Natural killer cell (primary cell): ENCODE measurements at regions of chr2 and their contacts with region 1.

Region 1: GRCh38 chr2:197378494-197379307 is 56.1 kb downstream of the SF3B1 start:
- DNase-seq: peak; percentile 39 to 82
- ATAC-seq: peak; percentile 60 to 82 (median 65)
- H3K4me3 ChIP-seq: no peak overlapping the region
- H3K4me3 Mint-ChIP-seq: no peak overlapping the region
- H3K27ac ChIP-seq: no peak overlapping the region
- H3K27ac Mint-ChIP-seq: no peak overlapping the region
- H3K4me1 ChIP-seq: no peaks in the 10 kb centered on the region
- H3K4me1 Mint-ChIP-seq: peaks cover 4 to 5% of the 10 kb centered on the region in 2 donors
- H3K27me3 ChIP-seq: no peaks in the 10 kb centered on the region
- H3K27me3 Mint-ChIP-seq: peaks cover 5 to 9% of the 10 kb centered on the region in 2 donors
- CTCF ChIP-seq: peak; percentile 83

Region 2: GRCh38 chr2:196750982-196751635 is 627.6 kb before region 1 on chr2:
- intact Hi-C with region 1: loop called (anchors 1 kb)
- DNase-seq: peak; percentile 46 to 77
- ATAC-seq: peak; percentile 89 to 99 (median 98)
- H3K4me3 ChIP-seq: no peak overlapping the region
- H3K4me3 Mint-ChIP-seq: no peak overlapping the region
- H3K27ac ChIP-seq: no peak overlapping the region
- H3K27ac Mint-ChIP-seq: peak overlapping the region in 1 of 2 donors; percentile 27
- H3K4me1 ChIP-seq: peaks cover 6% of the 10 kb centered on the region
- H3K4me1 Mint-ChIP-seq: peaks cover 10 to 17% of the 10 kb centered on the region in 2 donors
- H3K27me3 ChIP-seq: no peaks in the 10 kb centered on the region
- H3K27me3 Mint-ChIP-seq: no peaks in the 10 kb centered on the region
- CTCF ChIP-seq: peak; percentile 73

Region 3: GRCh38 chr2:197011799-197012641 is 366.7 kb before region 1 on chr2:
- intact Hi-C with region 1: loop called (anchors 1 kb)
- DNase-seq: peak in 1 of 2 donors; percentile 68
- ATAC-seq: peak; percentile 59 to 77 (median 66)
- H3K4me3 ChIP-seq: no peak overlapping the region
- H3K4me3 Mint-ChIP-seq: no peak overlapping the region
- H3K27ac ChIP-seq: no peak overlapping the region
- H3K27ac Mint-ChIP-seq: peak overlapping the region; percentile 55 to 74
- H3K4me1 ChIP-seq: no peaks in the 10 kb centered on the region
- H3K4me1 Mint-ChIP-seq: peaks cover 9 to 17% of the 10 kb centered on the region in 2 donors
- H3K27me3 ChIP-seq: no peaks in the 10 kb centered on the region
- H3K27me3 Mint-ChIP-seq: no peaks in the 10 kb centered on the region
- CTCF ChIP-seq: peak; percentile 77

Region 4: DNA sequence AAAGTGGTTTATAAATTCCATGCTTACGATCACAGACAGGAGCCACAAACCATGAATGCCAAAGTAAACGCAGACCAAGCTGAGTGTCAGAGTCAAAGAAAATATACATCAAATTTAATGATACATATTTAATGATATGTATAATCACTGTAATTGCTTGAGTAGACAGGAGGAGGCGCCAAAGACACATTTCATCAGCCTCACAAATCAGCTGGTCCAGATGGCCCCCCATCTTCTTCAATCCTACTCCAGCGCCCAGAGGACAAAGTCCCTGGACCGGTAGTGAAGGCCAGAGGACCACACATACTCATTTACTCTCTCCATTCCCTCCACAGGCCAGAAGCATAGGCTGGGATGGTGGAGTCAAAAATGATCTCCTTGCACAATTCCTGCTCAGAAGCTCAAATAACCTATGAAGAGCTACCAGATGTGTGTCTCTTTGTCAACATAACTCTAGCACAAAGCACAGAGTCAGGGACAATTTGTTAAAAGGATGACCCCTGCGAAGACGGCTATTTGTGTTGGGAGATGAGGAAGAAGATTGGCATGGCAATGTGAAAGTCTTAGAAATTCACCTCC is 302.9 kb before region 1 on chr2:
- intact Hi-C with region 1: loop called (anchors 1 kb)
- DNase-seq: peak in 1 of 2 donors; percentile 51
- ATAC-seq: peak in 2 of 3 donors; percentile 43 to 44
- H3K4me3 ChIP-seq: no peak overlapping the region
- H3K4me3 Mint-ChIP-seq: no peak overlapping the region
- H3K27ac ChIP-seq: no peak overlapping the region
- H3K27ac Mint-ChIP-seq: peak overlapping the region; percentile 36 to 77
- H3K4me1 ChIP-seq: no peaks in the 10 kb centered on the region
- H3K4me1 Mint-ChIP-seq: peaks cover 17 to 22% of the 10 kb centered on the region in 2 donors
- H3K27me3 ChIP-seq: no peaks in the 10 kb centered on the region
- H3K27me3 Mint-ChIP-seq: no peaks in the 10 kb centered on the region
- CTCF ChIP-seq: peak; percentile 49

Region 5: GRCh38 chr2:197113275-197113711 is 265.4 kb before region 1 on chr2:
- intact Hi-C with region 1: loop called (anchors 1 kb)
- DNase-seq: peak in 1 of 2 donors; percentile 71
- ATAC-seq: peak in 2 of 3 donors; percentile 48 to 63
- H3K4me3 ChIP-seq: no peak overlapping the region
- H3K4me3 Mint-ChIP-seq: no peak overlapping the region
- H3K27ac ChIP-seq: no peak overlapping the region
- H3K27ac Mint-ChIP-seq: peak overlapping the region; percentile 43 to 72
- H3K4me1 ChIP-seq: no peaks in the 10 kb centered on the region
- H3K4me1 Mint-ChIP-seq: peaks cover 23 to 27% of the 10 kb centered on the region in 2 donors
- H3K27me3 ChIP-seq: no peaks in the 10 kb centered on the region
- H3K27me3 Mint-ChIP-seq: no peaks in the 10 kb centered on the region
- CTCF ChIP-seq: peak; percentile 80

Region 6: GRCh38 chr2:197191177-197191939 is 187.3 kb before region 1 on chr2:
- intact Hi-C with region 1: loop called (anchors 1 kb)
- DNase-seq: peak in 1 of 2 donors; percentile 86
- ATAC-seq: peak; percentile 56 to 71 (median 59)
- H3K4me3 ChIP-seq: no peak overlapping the region
- H3K4me3 Mint-ChIP-seq: peak overlapping the region; percentile 57
- H3K27ac ChIP-seq: peak overlapping the region; percentile 62
- H3K27ac Mint-ChIP-seq: peak overlapping the region; percentile 85 to 91
- H3K4me1 ChIP-seq: peaks cover 14% of the 10 kb centered on the region
- H3K4me1 Mint-ChIP-seq: peaks cover 79 to 83% of the 10 kb centered on the region in 2 donors
- H3K27me3 ChIP-seq: no peaks in the 10 kb centered on the region
- H3K27me3 Mint-ChIP-seq: no peaks in the 10 kb centered on the region
- CTCF ChIP-seq: peak; percentile 89